Panc1 (cell line): ENCODE measurements at regions of chr6 and their contacts with region 1.

Region 1: DNA sequence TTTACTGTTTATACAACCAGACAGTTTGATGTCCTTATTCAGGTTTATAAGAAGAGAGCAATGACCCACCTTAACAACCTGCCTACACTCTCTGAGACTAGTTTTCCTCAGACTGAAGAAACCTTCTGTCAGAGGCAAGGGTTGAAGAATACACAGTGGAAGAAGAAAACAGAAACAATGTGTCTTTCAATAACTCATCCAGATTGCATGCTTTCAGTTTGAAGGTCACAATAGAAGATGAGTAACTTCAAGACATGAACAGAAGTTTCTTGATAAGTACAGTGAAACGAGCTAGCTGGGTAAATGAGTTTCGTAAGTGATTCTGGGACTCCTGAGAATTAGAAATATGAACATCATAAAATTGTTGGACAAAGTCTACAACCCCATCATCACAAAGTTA is 141.7 kb downstream of the STXBP5 start:
- DNase-seq: no peak
- ATAC-seq: no peak
- H3K4me3 ChIP-seq: no peak overlapping the region
- H3K27ac ChIP-seq: no peak overlapping the region
- H3K4me1 ChIP-seq: no peaks in the 10 kb centered on the region
- H3K27me3 ChIP-seq: no peaks in the 10 kb centered on the region
- CTCF ChIP-seq: no peak

Region 2: DNA sequence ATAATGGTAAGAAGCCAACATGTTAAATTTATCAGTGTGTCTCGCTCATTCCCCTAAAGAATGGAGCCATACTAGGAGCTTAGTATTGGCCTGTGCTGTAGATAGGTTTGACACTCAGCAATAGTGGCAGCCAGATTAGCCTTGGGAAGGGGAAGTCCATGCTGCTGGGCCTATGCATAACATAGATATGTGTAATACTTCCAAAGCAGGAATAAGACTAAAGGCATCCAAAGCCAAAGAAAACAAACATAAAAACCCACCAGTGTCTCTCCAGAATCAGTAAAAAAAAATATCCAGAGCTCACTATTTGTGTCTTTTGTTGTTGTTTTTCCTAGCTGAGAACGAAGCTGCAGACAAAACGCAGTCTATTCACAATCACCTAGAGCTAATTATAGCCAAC is 245.9 kb before region 1 on chr6:
- CTCF ChIA-PET with region 1: no interaction called
- POLR2A ChIA-PET with region 1: no interaction called
- in situ Hi-C with region 1: no loop called
- intact Hi-C with region 1: no loop called
- DNase-seq: no peak
- ATAC-seq: peak; percentile 91
- H3K4me3 ChIP-seq: no peak overlapping the region
- H3K27ac ChIP-seq: peak overlapping the region; percentile 8; the same call in 1 of the 2 replicates
- H3K4me1 ChIP-seq: peaks cover 7% of the 10 kb centered on the region; the same call in 1 of the 2 replicates
- H3K27me3 ChIP-seq: no peaks in the 10 kb centered on the region
- CTCF ChIP-seq: no peak

Region 3: DNA sequence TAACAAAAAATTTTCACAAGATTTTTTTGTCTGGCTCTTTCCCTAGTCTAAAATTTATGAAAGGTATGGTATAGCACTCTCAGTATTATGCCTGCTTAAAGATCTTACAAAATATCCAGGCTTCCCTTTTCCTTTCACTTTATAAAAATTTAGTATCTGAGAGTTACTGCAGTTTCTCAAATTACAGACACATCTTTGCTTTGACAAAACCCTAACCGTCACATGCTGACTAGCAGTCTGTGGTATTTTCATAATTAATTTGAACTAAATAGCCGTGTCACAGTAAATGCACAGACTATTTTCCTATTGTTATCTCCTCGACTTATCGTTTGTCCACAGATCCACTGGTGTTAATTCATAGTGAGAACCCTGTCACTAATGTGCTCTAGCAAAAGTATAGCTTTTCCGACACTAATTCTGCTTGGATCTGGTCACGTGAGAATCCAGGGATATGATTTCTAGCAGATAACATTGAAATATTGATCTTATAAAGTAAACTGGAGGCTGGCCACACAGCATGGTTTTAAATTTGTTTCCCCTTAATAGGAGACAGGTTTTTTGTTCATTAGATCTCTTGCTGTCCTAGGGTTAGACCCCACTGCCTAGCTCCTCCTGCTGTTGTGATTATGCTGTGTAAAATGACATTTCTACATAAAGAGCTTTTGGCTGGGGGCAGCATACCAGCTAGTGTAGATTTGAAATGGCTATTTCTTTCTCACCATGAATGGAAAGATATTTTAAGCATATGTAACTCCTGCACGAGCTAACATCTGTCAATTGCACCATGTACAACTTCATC is 656.1 kb after region 1 on chr6:
- CTCF ChIA-PET with region 1: no interaction called
- POLR2A ChIA-PET with region 1: no interaction called
- in situ Hi-C with region 1: no loop called
- intact Hi-C with region 1: no loop called
- DNase-seq: no peak
- ATAC-seq: no peak
- H3K4me3 ChIP-seq: no peak overlapping the region
- H3K27ac ChIP-seq: no peak overlapping the region
- H3K4me1 ChIP-seq: no peaks in the 10 kb centered on the region
- H3K27me3 ChIP-seq: no peaks in the 10 kb centered on the region
- CTCF ChIP-seq: no peak

Region 4: DNA sequence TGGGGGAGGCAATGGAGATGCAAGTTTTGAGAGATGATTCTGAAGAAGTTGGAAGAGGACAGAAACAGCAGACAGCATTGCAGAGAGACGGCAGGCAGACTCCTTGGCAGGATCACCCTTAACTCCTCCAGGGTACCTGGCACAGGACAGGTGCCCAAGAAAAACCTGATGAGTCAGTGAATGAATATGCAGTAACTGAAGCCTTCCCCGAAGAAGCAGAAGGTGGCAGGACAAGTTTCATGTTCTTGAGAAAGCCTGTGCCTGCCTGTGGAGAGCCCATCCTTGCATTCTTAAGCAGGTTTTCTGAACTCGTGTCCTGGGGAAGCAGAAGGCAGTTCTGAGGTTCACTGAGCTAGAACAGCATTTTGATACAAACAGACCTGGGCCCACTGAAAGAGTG is 917.1 kb after region 1 on chr6:
- CTCF ChIA-PET with region 1: no interaction called
- POLR2A ChIA-PET with region 1: interaction called, 14 read pairs
- in situ Hi-C with region 1: no loop called
- intact Hi-C with region 1: no loop called
- DNase-seq: no peak
- ATAC-seq: no peak
- H3K4me3 ChIP-seq: no peak overlapping the region
- H3K27ac ChIP-seq: no peak overlapping the region
- H3K4me1 ChIP-seq: no peaks in the 10 kb centered on the region
- H3K27me3 ChIP-seq: no peaks in the 10 kb centered on the region
- CTCF ChIP-seq: no peak